ENCODE measurements at regions of chr2 and their contacts with region 1.

Region 1: GRCh38 chr2:208040199-208041171 is 15.2 kb upstream of the PLEKHM3 start:
- DNase-seq: peak; percentile 62
- CTCF ChIP-seq: peak; percentile 75

Region 2: DNA sequence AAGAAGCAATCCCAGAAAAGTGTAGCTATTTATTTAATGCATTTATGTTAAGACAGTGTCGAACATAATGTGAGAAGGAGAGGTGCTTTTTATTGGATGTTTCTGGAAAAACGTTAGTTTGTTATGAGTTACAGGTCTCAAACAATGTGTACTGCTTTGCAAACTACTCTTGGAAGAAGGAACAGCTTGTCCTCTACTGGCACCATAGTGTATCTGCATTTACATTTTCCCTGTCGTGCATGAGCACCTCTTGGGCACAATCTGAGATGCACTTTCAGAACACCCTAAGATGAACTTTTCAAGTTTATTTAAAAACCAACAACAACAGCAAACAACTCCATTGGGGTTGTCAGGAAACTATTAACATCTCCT is 306.2 kb before region 1 on chr2:
- CTCF ChIA-PET with region 1: interaction called, 12 read pairs
- POLR2A ChIA-PET with region 1: no interaction called
- DNase-seq: no peak
- CTCF ChIP-seq: peak; percentile 17

Region 3: GRCh38 chr2:207762146-207762545 is 278.3 kb before region 1 on chr2:
- CTCF ChIA-PET with region 1: interaction called, 20 read pairs
- POLR2A ChIA-PET with region 1: no interaction called
- DNase-seq: no peak
- CTCF ChIP-seq: no peak

Region 4: GRCh38 chr2:208025037-208025813 is 15.3 kb before region 1 on chr2 and contains the start of gene PLEKHM3:
- CTCF ChIA-PET with region 1: interaction called, 19 read pairs
- POLR2A ChIA-PET with region 1: no interaction called
- DNase-seq: peak; percentile 83
- CTCF ChIP-seq: no peak

Region 5: DNA sequence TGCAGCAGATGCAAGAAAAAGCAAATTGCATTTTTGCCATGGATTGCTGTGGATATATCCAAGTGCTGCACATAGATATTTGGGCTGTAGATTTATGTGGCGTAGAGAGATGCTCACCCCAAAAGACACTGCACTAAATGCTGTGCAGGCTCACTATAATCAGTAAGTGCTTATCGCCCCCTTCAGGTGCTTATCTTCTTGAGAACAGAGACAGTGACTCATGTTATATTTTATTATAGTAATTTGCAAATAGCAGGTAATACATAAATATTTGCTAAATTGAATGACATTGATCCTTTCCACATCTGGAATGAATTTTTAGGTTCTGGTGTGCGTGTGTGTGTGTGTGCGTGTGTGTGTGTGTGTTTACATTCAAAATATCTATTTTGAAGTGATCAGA is 21.6 kb after region 1 on chr2:
- CTCF ChIA-PET with region 1: interaction called, 20 read pairs
- POLR2A ChIA-PET with region 1: no interaction called
- DNase-seq: no peak
- CTCF ChIP-seq: peak; percentile 32